CD8-positive, alpha-beta T cell (primary cell): ENCODE measurements at regions of chr11 and their contacts with region 1.

Region 1: DNA sequence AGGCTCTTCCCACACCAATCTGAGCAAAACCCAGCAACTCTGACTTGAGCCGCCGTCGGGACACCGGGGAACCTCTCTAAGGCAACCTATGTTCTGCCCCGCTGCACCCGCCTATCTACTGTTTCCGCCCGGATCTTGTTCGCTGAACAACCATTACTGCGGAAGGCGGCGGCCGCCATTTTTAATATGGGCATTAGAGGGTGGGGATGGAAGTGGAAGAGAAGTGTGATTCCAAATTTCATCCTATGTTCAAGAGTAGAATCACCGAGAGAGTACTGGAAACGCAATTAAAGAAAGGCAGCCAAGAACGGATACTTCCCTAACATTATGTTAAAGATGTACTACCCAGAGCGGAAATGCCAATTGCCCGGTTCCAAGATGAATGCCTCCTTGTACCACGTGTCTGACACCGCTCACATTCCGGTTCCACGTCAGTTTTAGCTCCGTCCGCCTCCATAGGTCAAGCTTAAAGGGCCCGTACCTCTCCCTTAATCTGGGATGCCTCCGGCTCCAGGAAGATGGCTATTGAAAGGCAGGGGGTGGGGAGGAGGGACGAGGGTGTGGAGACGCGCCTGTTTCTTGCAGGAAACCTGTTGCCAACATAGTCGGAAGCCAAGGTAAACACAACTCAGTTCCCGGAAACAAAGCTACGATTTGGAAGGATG is at the start of gene DPAGT1:
- DNase-seq: peak; percentile 68 to 93 (median 84)
- ATAC-seq: peak; percentile 87
- H3K4me3 ChIP-seq: peak within 1 kb of the TSS; percentile 81 to 87
- H3K4me3 Mint-ChIP-seq: peak within 1 kb of the TSS; percentile 98
- H3K27ac ChIP-seq: peak within 1 kb of the TSS; percentile 94 to 97
- H3K27ac Mint-ChIP-seq: peak within 1 kb of the TSS; percentile 97
- H3K4me1 ChIP-seq: peaks cover 31% of the 10 kb centered on the region
- H3K4me1 Mint-ChIP-seq: peaks cover 53% of the 10 kb centered on the region
- H3K27me3 ChIP-seq: no peaks in the 10 kb centered on the region
- H3K27me3 Mint-ChIP-seq: no peaks in the 10 kb centered on the region
- CTCF ChIP-seq: no peak
- total RNA-seq, gene DPAGT1: 9.4 to 9.9 TPM

Region 2: DNA sequence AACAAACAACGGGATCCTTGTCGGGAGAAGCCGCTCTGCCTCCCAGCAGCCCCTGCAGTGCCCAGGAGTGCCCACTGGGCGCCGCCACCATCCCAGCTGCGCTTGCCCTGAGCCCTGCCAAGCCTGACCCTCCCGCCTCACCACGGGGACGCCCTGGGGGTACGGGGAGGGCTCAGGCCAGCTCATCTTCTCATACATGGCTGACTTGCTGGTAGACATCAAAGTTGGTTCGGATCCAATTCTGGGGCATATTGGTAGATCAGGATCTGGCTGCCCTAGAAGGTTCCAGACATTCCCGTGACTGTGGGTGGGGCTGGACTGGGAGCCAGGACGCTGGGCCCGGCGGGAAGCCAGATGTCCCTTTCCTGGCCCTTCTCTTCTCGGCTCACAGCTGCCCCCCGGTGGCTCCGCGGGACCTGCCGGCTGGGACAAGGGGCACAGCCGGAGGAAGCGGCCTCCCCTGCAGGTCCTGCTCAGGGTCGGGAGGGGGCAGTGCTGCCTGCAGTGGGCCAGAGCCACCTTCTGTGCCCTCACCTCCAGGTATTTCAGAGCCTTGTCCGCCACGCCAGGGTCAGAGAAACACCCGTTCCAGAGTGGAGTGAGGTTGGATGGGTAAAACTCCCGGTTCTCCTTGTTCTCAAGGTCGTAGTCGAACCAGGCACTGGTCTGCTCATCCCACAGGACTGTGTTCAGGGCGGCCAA is 411.9 kb before region 1 on chr11:
- CTCF ChIA-PET with region 1: no interaction called
- POLR2A ChIA-PET with region 1: no interaction called
- intact Hi-C with region 1: no loop called
- DNase-seq: peak; percentile 67 to 92 (median 89)
- ATAC-seq: peak; percentile 85
- H3K4me3 ChIP-seq: peak overlapping the region; percentile 45 to 83
- H3K4me3 Mint-ChIP-seq: peak overlapping the region; percentile 74
- H3K27ac ChIP-seq: peak overlapping the region; percentile 40 to 51
- H3K27ac Mint-ChIP-seq: peak overlapping the region; percentile 87
- H3K4me1 ChIP-seq: peaks cover 54% of the 10 kb centered on the region
- H3K4me1 Mint-ChIP-seq: peaks cover 58% of the 10 kb centered on the region
- H3K27me3 ChIP-seq: no peaks in the 10 kb centered on the region
- H3K27me3 Mint-ChIP-seq: no peaks in the 10 kb centered on the region
- CTCF ChIP-seq: peak; percentile 98

Region 3: DNA sequence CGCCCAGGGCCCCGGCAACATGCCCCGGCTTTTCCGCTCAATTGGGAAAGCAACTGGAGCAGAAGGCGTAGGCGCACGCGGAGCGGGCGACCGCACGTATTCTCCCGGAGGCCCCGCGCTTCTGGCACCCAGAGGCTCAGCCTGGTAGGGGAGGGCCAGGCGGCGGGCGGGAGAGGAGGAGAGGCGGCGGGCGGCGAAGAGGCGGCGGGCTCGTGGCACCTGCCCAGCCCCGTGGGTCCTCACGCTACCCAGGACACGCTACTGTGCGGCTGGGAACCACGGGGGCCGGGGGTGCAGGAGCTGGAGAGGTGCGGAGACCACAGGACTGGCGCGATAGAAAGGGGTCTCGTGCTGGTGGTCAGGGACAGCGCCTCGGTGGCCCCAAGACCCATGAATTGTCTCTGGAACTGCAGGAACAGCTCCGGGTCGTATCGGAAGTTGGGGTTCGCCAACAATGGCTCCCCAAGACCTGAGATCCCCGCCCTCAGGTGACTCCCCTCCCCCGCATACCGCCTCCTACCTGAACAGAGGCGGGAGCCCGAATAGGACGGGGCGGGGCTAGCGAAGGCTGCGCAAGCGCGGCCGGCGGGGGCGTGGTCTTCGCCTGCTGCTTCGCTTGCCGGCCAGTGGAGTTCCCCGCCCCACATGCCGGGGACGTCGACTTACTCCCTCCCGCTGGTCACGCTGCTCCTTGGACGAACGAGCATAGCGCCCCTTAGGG is 71.4 kb before region 1 on chr11 and contains the start of gene SLC37A4:
- CTCF ChIA-PET with region 1: interaction called, 4 read pairs
- POLR2A ChIA-PET with region 1: interaction called, 4 read pairs
- intact Hi-C with region 1: loop called in 1 of 2 experiments (anchors 2 kb)
- DNase-seq: peak; percentile 97 to 100 (median 99)
- ATAC-seq: peak; percentile 93
- H3K4me3 ChIP-seq: peak within 1 kb of the TSS; percentile 94 to 99
- H3K4me3 Mint-ChIP-seq: peak within 1 kb of the TSS; percentile 89
- H3K27ac ChIP-seq: peak within 1 kb of the TSS; percentile 65 to 71
- H3K27ac Mint-ChIP-seq: peak within 1 kb of the TSS; percentile 88
- H3K4me1 ChIP-seq: peaks cover 13% of the 10 kb centered on the region
- H3K4me1 Mint-ChIP-seq: peaks cover 18% of the 10 kb centered on the region
- H3K27me3 ChIP-seq: no peaks in the 10 kb centered on the region
- H3K27me3 Mint-ChIP-seq: no peaks in the 10 kb centered on the region
- CTCF ChIP-seq: peak; percentile 34
- total RNA-seq, gene SLC37A4: 4.0 to 4.6 TPM

Region 4: GRCh38 chr11:119084663-119085436 is 17.0 kb before region 1 on chr11 and contains the start of gene HMBS:
- CTCF ChIA-PET with region 1: interaction called, 3 read pairs
- POLR2A ChIA-PET with region 1: interaction called, 17 read pairs
- intact Hi-C with region 1: loop called (anchors 1 kb)
- DNase-seq: peak; percentile 78 to 97 (median 92)
- ATAC-seq: peak; percentile 93
- H3K4me3 ChIP-seq: peak within 1 kb of the TSS; percentile 92
- H3K4me3 Mint-ChIP-seq: peak within 1 kb of the TSS; percentile 91
- H3K27ac ChIP-seq: peak within 1 kb of the TSS; percentile 75 to 86
- H3K27ac Mint-ChIP-seq: peak within 1 kb of the TSS; percentile 93
- H3K4me1 ChIP-seq: peaks cover 18% of the 10 kb centered on the region
- H3K4me1 Mint-ChIP-seq: peaks cover 20% of the 10 kb centered on the region
- H3K27me3 ChIP-seq: no peaks in the 10 kb centered on the region
- H3K27me3 Mint-ChIP-seq: no peaks in the 10 kb centered on the region
- CTCF ChIP-seq: no peak
- total RNA-seq, gene HMBS: 5.4 to 6.4 TPM

Region 5: DNA sequence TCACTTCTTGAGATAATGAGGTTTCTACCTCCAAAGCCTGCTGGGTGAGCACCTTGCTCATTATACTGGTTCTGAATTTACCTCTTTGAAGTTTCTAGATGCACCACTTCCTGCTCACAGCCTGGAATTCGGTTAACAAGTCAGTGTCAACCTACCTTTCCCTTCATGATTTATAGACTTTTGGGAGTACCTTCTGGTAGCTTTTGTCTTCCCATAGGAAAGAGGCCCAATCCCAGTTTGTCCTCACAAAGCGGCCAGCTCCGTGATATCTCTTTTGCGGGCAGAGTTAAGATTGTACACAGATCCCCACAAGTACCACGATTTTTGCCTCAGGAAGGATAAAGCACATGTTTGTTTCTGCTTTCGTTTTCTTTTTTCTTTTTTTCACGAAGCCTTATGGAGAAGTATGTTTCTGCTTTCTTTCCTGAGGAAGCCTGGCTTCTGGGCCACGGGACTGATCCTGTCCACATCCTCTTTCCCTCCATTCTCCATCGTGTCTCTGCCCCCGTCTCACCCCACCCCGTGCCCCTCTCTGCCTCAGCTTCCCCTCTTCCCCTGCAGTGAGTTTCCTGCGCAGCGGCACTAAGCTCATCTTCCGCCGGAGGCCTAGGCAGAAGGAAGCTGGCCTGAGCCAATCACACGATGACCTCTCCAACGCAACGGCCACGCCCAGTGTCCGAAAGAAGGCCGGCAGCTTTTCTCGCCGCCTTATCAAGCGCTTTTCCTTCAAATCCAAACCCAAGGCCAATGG is 13.8 kb after region 1 on chr11:
- CTCF ChIA-PET with region 1: interaction called, 16 read pairs
- POLR2A ChIA-PET with region 1: interaction called, 32 read pairs
- intact Hi-C with region 1: no loop called
- DNase-seq: peak in 4 of 9 experiments; percentile 33 to 69 (median 56)
- ATAC-seq: peak; percentile 89
- H3K4me3 ChIP-seq: peak overlapping the region; percentile 12 to 42
- H3K4me3 Mint-ChIP-seq: peak overlapping the region; percentile 82
- H3K27ac ChIP-seq: peak overlapping the region; percentile 59 to 62
- H3K27ac Mint-ChIP-seq: peak overlapping the region; percentile 96
- H3K4me1 ChIP-seq: peaks cover 35% of the 10 kb centered on the region
- H3K4me1 Mint-ChIP-seq: peaks cover 28% of the 10 kb centered on the region
- H3K27me3 ChIP-seq: no peaks in the 10 kb centered on the region
- H3K27me3 Mint-ChIP-seq: no peaks in the 10 kb centered on the region
- CTCF ChIP-seq: no peak

Region 6: GRCh38 chr11:119121008-119121810 is 19.3 kb after region 1 on chr11 and contains the start of gene HINFP:
- CTCF ChIA-PET with region 1: interaction called, 16 read pairs
- POLR2A ChIA-PET with region 1: interaction called, 32 read pairs
- intact Hi-C with region 1: loop called (anchors 1 kb)
- DNase-seq: peak; percentile 100
- ATAC-seq: peak; percentile 97
- H3K4me3 ChIP-seq: peak within 1 kb of the TSS; percentile 81 to 93
- H3K4me3 Mint-ChIP-seq: peak within 1 kb of the TSS; percentile 87
- H3K27ac ChIP-seq: peak within 1 kb of the TSS; percentile 69 to 80
- H3K27ac Mint-ChIP-seq: peak within 1 kb of the TSS; percentile 92
- H3K4me1 ChIP-seq: peaks cover 24% of the 10 kb centered on the region
- H3K4me1 Mint-ChIP-seq: peaks cover 43% of the 10 kb centered on the region
- H3K27me3 ChIP-seq: no peaks in the 10 kb centered on the region
- H3K27me3 Mint-ChIP-seq: no peaks in the 10 kb centered on the region
- CTCF ChIP-seq: no peak
- total RNA-seq, gene HINFP: 17.0 to 19.5 TPM

Region 7: DNA sequence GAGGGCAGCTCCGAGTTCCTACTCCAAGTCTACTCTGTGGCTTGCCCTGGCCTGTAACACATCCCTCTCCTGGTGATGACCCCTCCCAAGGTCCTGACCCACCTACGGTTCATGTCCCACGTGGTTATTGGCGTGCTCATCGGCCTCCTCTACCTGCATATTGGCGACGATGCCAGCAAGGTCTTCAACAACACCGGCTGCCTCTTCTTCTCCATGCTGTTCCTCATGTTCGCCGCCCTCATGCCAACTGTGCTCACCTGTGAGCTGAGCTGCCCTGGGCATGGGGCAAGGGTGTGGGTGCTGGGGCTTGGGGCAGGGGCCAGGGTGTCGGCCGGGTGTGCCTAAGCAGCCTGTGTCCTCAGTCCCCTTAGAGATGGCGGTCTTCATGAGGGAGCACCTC is 56.6 kb after region 1 on chr11:
- CTCF ChIA-PET with region 1: no interaction called
- POLR2A ChIA-PET with region 1: no interaction called
- intact Hi-C with region 1: no loop called
- DNase-seq: no peak
- ATAC-seq: no peak
- H3K4me3 ChIP-seq: no peak overlapping the region
- H3K4me3 Mint-ChIP-seq: no peak overlapping the region
- H3K27ac ChIP-seq: no peak overlapping the region
- H3K27ac Mint-ChIP-seq: no peak overlapping the region
- H3K4me1 ChIP-seq: no peaks in the 10 kb centered on the region
- H3K4me1 Mint-ChIP-seq: no peaks in the 10 kb centered on the region
- H3K27me3 ChIP-seq: no peaks in the 10 kb centered on the region
- H3K27me3 Mint-ChIP-seq: peaks cover 4% of the 10 kb centered on the region
- CTCF ChIP-seq: no peak

Region 8: GRCh38 chr11:119651802-119652584 is 550.1 kb after region 1 on chr11:
- CTCF ChIA-PET with region 1: no interaction called
- POLR2A ChIA-PET with region 1: no interaction called
- intact Hi-C with region 1: no loop called
- DNase-seq: no peak
- ATAC-seq: no peak
- H3K4me3 ChIP-seq: no peak overlapping the region
- H3K4me3 Mint-ChIP-seq: no peak overlapping the region
- H3K27ac ChIP-seq: no peak overlapping the region
- H3K27ac Mint-ChIP-seq: no peak overlapping the region
- H3K4me1 ChIP-seq: no peaks in the 10 kb centered on the region
- H3K4me1 Mint-ChIP-seq: no peaks in the 10 kb centered on the region
- H3K27me3 ChIP-seq: no peaks in the 10 kb centered on the region
- H3K27me3 Mint-ChIP-seq: peaks cover 8% of the 10 kb centered on the region
- CTCF ChIP-seq: no peak